CD14-positive monocyte (primary cell): ENCODE measurements at regions of chr10 and their contacts with region 1.

Region 1: DNA sequence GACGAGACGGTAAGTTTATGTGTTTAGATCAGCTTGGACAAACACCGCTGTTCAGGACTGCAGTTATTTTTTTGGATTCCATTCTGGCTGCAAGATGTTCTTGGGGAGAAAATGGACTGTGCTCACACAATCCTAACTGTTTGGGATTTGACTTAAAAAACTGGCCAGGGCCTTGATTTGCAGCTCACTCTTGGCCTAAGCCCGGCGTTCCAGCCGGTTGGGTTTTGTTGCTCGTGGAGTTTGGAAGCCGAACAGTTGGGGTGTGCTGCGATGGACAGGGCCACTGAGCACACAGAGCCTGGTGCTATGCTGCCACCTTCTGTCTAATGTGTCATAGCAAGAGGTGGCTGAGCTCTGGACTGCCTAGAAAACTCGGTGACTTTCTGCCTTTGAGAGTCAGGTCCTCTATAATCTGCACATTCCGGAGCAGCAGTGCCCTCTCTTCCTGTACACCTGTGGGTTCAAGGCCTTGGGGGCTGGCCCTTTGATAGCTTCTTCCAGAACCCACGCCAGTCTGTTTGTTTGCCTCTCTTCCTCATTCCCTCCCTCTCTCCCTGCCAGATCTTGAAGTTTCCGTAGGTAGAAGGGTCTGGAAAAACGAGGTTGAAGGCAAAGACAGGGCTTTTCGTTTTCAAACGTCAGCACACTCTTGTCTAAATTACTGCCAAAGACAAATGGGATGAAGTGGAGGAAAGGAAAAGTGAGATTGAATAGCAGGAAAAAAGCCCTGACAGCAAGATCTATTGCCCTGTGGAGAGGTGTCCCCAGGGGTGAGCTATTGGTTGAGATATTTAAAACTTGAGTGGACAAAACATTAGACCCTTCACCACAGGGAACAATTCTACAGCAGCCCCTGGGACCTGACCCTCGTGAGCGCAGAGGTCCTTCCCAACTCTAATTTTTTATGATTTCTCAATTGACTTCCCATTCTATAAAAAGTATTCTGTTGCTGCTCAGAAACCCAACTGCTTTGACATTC is 167.5 kb upstream of the HABP2 start:
- DNase-seq: peak; percentile 68 to 77 (median 77)
- H3K4me3 ChIP-seq: no peak overlapping the region
- H3K4me3 Mint-ChIP-seq: no peak overlapping the region
- H3K27ac ChIP-seq: no peak overlapping the region
- H3K27ac Mint-ChIP-seq: peak overlapping the region in 3 of 7 donors; percentile 8 to 40 (median 35)
- H3K4me1 ChIP-seq: peaks cover 27 to 33% of the 10 kb centered on the region in 2 donors
- H3K4me1 Mint-ChIP-seq: peaks cover 36% of the 10 kb centered on the region
- H3K27me3 ChIP-seq: no peaks in the 10 kb centered on the region
- H3K27me3 Mint-ChIP-seq: peaks cover 0 to 9% (median 1%) of the 10 kb centered on the region in 3 donors
- CTCF ChIP-seq: peak; percentile 81

Region 2: DNA sequence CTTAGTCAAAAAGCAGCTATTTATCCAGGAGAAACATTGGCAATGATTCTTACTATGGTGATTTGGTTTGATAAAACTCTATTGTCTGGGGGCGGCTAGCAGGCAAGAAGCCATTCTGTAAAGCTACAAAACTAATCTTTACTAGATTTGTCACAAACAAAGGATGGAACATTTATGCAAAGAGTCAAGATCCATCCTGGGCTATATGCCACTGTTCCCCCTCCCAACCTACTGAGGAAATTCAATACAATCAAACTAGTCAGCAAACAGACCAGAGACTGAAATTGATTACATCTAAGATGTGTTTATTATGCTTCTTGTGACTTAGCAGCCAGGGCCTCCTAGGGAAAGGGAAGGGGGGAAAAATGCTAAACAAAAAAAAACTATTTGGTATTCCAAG is 1599.4 kb before region 1 on chr10:
- intact Hi-C with region 1: no loop called
- DNase-seq: no peak
- H3K4me3 ChIP-seq: no peak overlapping the region
- H3K4me3 Mint-ChIP-seq: no peak overlapping the region
- H3K27ac ChIP-seq: no peak overlapping the region
- H3K27ac Mint-ChIP-seq: no peak overlapping the region
- H3K4me1 ChIP-seq: no peaks in the 10 kb centered on the region
- H3K4me1 Mint-ChIP-seq: no peaks in the 10 kb centered on the region
- H3K27me3 ChIP-seq: no peaks in the 10 kb centered on the region
- H3K27me3 Mint-ChIP-seq: no peaks in the 10 kb centered on the region
- CTCF ChIP-seq: no peak

Region 3: DNA sequence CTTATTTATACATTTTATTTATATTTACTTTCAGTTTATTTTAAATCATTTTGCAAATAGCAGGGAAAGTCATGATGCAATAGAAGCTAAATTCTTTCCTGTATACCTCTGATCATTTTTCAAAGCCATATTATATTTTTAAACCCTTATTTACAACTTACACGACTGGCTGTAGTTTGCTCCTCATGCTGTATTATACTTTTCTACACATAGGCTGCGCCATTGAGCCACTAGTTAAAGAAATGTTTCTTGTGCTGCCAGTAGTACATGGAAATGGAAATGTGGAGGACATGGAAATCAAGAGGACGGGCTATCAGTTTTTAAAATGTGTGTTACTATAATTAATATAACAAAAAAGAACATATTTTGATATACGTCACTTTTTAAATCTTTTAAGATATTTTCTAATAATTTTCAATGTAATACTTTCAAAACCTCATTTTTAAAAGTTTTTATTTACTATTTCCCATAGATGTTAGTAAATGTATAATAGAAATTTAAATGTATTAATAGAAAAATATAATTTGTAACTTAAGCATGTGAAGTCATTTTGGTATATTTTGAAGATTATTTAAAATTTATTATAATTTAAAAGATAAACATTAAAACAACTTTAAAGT is 819.8 kb before region 1 on chr10:
- intact Hi-C with region 1: loop called in 1 of 2 experiments (anchors 10 kb)
- DNase-seq: peak; percentile 17 to 35 (median 32)
- H3K4me3 ChIP-seq: no peak overlapping the region
- H3K4me3 Mint-ChIP-seq: no peak overlapping the region
- H3K27ac ChIP-seq: no peak overlapping the region
- H3K27ac Mint-ChIP-seq: no peak overlapping the region
- H3K4me1 ChIP-seq: no peaks in the 10 kb centered on the region
- H3K4me1 Mint-ChIP-seq: no peaks in the 10 kb centered on the region
- H3K27me3 ChIP-seq: no peaks in the 10 kb centered on the region
- H3K27me3 Mint-ChIP-seq: peaks cover 0 to 2% (median 0%) of the 10 kb centered on the region in 3 donors
- CTCF ChIP-seq: peak; percentile 74

Region 4: DNA sequence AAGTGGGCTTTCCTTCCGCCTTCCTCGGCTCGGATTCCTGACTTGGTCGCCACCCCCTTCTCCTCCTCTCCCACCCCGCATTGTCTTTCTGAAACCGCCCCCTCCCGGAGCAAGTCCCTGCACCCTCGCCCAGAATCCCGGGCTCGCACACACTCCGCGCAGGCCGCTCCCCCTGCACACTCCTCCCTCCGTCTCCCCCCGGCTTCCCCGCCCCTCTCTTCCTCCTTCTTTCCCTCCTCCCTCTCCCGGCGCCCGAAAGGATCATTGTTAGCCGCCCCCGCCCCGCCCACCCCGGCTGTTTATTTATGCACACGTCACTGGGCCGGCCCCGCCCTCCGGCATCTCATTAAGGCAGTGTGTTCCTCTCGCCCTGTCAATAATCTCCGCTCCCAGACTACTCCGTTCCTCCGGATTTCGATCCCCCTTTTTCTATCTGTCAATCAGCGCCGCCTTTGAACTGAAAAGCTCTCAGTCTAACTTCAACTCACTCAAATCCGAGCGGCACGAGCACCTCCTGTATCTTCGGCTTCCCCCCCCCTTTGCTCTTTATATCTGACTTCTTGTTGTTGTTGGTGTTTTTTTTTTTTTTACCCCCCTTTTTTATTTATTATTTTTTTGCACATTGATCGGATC is 435.3 kb before region 1 on chr10 and contains the start of gene TCF7L2:
- intact Hi-C with region 1: loop called in 1 of 2 experiments (anchors 5 kb)
- DNase-seq: peak; percentile 87 to 90 (median 90)
- H3K4me3 ChIP-seq: peak within 1 kb of the TSS; percentile 87 to 100 (median 88)
- H3K4me3 Mint-ChIP-seq: peak within 1 kb of the TSS; percentile 99
- H3K27ac ChIP-seq: peak within 1 kb of the TSS; percentile 58 to 80
- H3K27ac Mint-ChIP-seq: peak within 1 kb of the TSS; percentile 91 to 99 (median 98)
- H3K4me1 ChIP-seq: peaks cover 31 to 41% of the 10 kb centered on the region in 2 donors
- H3K4me1 Mint-ChIP-seq: peaks cover 41% of the 10 kb centered on the region
- H3K27me3 ChIP-seq: peaks cover 12 to 22% of the 10 kb centered on the region in 2 donors
- H3K27me3 Mint-ChIP-seq: peaks cover 16 to 28% (median 22%) of the 10 kb centered on the region in 3 donors
- CTCF ChIP-seq: no peak
- polyA plus RNA-seq, gene TCF7L2: 2.1 to 23.5 (median 6.1) TPM

Region 5: GRCh38 chr10:113151190-113151666 is 234.1 kb before region 1 on chr10:
- intact Hi-C with region 1: loop called in 1 of 2 experiments (anchors 10 kb)
- DNase-seq: peak in 2 of 3 donors; percentile 56 to 79
- H3K4me3 ChIP-seq: peak overlapping the region in 1 of 3 experiments; percentile 52
- H3K4me3 Mint-ChIP-seq: peak overlapping the region; percentile 40 to 69
- H3K27ac ChIP-seq: peak overlapping the region; percentile 47 to 62
- H3K27ac Mint-ChIP-seq: peak overlapping the region; percentile 57 to 90 (median 88)
- H3K4me1 ChIP-seq: peaks cover 42 to 43% of the 10 kb centered on the region in 2 donors
- H3K4me1 Mint-ChIP-seq: peaks cover 48% of the 10 kb centered on the region
- H3K27me3 ChIP-seq: no peaks in the 10 kb centered on the region
- H3K27me3 Mint-ChIP-seq: peaks cover 0 to 2% (median 0%) of the 10 kb centered on the region in 3 donors
- CTCF ChIP-seq: no peak

Region 6: DNA sequence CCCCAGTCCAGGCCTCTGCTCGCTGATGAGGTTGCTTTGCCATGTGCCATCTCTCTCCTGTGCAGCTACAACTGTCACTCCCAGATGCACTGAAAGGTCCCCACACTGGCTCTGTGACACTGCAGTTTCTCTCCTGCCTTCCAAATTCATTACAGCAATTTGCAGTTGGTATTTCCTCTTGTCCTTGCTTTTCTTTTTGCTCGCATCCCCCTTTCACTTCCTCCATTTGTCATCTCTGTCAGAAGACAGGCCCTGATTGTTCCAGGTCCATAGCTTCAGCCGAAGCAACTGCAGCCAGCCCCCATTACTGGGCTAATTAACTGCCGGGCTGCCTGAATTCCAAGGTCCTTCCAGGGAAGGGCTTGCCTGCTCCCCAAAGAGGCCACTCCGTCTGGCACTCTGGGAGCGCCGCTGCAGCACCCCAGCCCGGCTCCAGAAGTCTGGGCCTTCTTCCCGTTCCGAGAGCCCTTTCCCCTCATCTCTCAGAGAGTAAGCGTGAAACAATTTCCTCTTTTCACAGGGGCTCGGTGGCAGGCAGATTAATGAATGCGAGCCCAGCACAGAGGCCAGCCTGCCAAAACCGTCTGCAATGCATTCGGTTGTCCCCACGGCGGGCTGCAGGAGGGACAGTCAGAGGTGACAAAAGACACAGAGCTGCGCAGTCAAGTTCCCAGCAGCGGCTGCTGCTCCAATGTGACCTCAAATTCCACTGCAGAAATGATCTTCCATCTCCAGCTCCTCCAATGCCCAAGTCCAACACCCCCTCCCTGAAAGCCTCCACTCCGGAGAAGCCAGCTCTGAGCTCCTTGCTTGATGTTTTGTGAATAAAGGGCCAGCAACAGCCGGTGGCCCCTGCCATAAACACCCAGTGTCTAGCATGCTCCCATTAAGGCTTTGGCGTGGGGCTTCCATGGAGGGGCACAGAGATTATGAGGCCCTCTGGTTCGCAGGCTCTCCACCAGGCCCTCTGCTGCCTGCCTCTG is 111.8 kb before region 1 on chr10:
- intact Hi-C with region 1: loop called in 1 of 2 experiments (anchors 10 kb)
- DNase-seq: peak; percentile 69 to 77 (median 74)
- H3K4me3 ChIP-seq: peak overlapping the region in 2 of 3 experiments; percentile 1 to 59
- H3K4me3 Mint-ChIP-seq: peak overlapping the region; percentile 67 to 89
- H3K27ac ChIP-seq: peak overlapping the region; percentile 73 to 86
- H3K27ac Mint-ChIP-seq: peak overlapping the region; percentile 89 to 96 (median 93)
- H3K4me1 ChIP-seq: peaks cover 40 to 49% of the 10 kb centered on the region in 2 donors
- H3K4me1 Mint-ChIP-seq: peaks cover 49% of the 10 kb centered on the region
- H3K27me3 ChIP-seq: no peaks in the 10 kb centered on the region
- H3K27me3 Mint-ChIP-seq: no peaks in the 10 kb centered on the region
- CTCF ChIP-seq: no peak